K562 (cell line): ENCODE measurements at regions of chr1 and their contacts with region 1.

Region 1: DNA sequence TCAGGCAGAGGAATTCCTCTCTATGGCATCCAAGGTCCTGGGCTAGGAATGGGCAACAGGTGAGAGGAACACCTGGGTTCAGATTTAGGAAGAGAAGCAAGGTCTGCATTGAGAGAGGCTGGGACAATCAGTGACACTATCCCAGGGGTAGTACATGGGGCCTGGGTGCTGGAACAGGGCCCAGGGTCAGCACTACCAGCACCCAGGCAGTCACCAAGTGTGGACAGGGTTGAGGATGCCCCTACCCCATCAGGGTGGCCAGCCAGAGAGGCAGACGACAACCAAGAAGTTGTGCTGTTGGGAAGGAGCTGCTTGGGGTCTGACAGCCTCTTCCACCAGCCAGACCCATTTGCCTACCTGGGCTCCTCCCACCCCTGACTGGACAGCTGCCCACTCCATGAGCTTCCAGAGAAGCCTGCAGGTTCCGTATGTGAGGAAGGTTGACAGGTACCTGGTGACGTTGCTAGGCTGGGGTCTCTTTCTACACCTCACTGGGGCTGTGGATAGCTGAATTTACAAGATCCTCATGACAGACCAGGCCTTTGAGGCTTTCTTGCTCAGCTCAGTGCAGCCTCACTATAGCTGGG is 13.9 kb downstream of the CYP4A11 start:
- DNase-seq: no peak
- ATAC-seq: no peak
- H3K4me3 ChIP-seq: no peak overlapping the region
- H3K27ac ChIP-seq: no peak overlapping the region
- H3K4me1 ChIP-seq: no peaks in the 10 kb centered on the region
- H3K27me3 ChIP-seq: peaks cover 0 to 4% of the 10 kb centered on the region in 2 experiments; a peak in 1 of 5 replicates
- CTCF ChIP-seq: no peak
- EP300 ChIP-seq: no peak
- POLR2A ChIP-seq: no peak
- RAD21 ChIP-seq: no peak

Region 2: GRCh38 chr1:46949275-46949666 is 21.9 kb after region 1 on chr1:
- CTCF ChIA-PET with region 1: no interaction called
- POLR2A ChIA-PET with region 1: no interaction called
- in situ Hi-C with region 1: no loop called
- intact Hi-C with region 1: no loop called
- DNase-seq: no peak
- ATAC-seq: no peak
- H3K4me3 ChIP-seq: no peak overlapping the region
- H3K27ac ChIP-seq: no peak overlapping the region
- H3K4me1 ChIP-seq: no peaks in the 10 kb centered on the region
- H3K27me3 ChIP-seq: peaks cover 0 to 3% of the 10 kb centered on the region in 2 experiments; a peak in 1 of 5 replicates
- CTCF ChIP-seq: no peak
- EP300 ChIP-seq: no peak
- POLR2A ChIP-seq: no peak
- RAD21 ChIP-seq: no peak

Region 3: GRCh38 chr1:46969014-46969619 is 41.8 kb after region 1 on chr1:
- CTCF ChIA-PET with region 1: no interaction called
- POLR2A ChIA-PET with region 1: no interaction called
- in situ Hi-C with region 1: loop called (anchors 5 kb)
- intact Hi-C with region 1: no loop called
- DNase-seq: peak in 3 of 4 experiments; percentile 7 to 14 (median 11)
- ATAC-seq: peak; percentile 70
- H3K4me3 ChIP-seq: no peak overlapping the region
- H3K27ac ChIP-seq: no peak overlapping the region
- H3K4me1 ChIP-seq: no peaks in the 10 kb centered on the region
- H3K27me3 ChIP-seq: peaks cover 0 to 6% of the 10 kb centered on the region in 2 experiments; a peak in 1 of 5 replicates
- CTCF ChIP-seq: peak; percentile 26 to 52 (median 49); a peak in 5 of 6 replicates
- EP300 ChIP-seq: no peak
- POLR2A ChIP-seq: no peak
- RAD21 ChIP-seq: no peak

Region 4: GRCh38 chr1:47147047-47147785 is 219.9 kb after region 1 on chr1:
- CTCF ChIA-PET with region 1: no interaction called
- POLR2A ChIA-PET with region 1: interaction called, 5 read pairs
- in situ Hi-C with region 1: loop called (anchors 5 kb)
- intact Hi-C with region 1: no loop called
- DNase-seq: no peak
- ATAC-seq: no peak
- H3K4me3 ChIP-seq: no peak overlapping the region
- H3K27ac ChIP-seq: no peak overlapping the region
- H3K4me1 ChIP-seq: no peaks in the 10 kb centered on the region
- H3K27me3 ChIP-seq: peaks cover 4 to 18% of the 10 kb centered on the region in 2 experiments; a peak in 4 of 5 replicates
- CTCF ChIP-seq: no peak
- EP300 ChIP-seq: no peak
- POLR2A ChIP-seq: no peak
- RAD21 ChIP-seq: no peak